ENCODE measurements at regions of chr1 and their contacts with region 1.

Region 1: GRCh38 chr1:3910857-3911845 is 11.1 kb upstream of the C1orf174 start:
- DNase-seq: peak; percentile 92
- H3K4me3 ChIP-seq: peak overlapping the region; percentile 83
- H3K27ac ChIP-seq: peak overlapping the region; percentile 100
- H3K4me1 ChIP-seq: peaks cover 62% of the 10 kb centered on the region
- CTCF ChIP-seq: peak; percentile 90

Region 2: DNA sequence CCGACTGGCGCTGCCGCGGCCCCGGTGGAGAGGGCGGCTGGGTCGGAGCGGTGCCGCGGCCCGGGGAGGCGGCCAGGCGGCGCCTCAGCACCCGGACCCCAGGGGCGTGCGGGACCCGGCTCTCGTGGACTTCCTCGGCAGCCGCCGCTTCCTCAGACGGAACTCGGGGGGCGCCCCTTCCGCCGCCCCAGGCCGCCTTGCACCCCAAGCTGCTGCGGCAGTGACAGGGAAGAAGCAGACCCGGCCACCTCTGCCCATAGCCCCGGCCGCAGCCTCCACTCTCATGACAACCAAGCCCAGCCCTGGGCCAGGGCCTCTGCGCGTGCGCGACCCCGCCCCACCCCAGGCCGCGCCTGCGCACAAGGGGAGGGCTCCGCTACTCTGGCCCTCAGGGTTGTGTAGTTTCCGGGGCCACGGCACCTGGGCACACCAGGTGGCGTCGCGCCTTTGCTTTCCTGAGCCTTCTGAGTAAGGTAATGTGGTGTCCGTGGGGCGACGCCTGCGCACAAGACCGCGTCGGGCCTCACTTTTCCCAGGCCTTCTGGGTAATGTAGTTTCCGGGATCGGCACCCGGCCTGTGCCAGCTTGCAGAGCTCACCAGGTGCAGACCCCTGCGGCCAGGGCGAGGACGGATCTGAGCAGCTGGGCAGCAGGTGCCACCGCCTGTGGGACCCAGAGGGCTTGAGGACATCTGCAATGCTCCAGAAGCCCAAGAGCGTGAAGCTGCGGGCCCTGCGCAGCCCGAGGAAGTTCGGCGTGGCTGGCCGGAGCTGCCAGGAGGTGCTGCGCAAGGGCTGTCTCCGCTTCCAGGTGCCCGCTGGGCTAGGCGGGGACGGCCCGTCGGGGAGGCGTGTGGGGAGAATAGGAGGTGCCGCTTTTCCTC is 54.0 kb before region 1 on chr1 and contains the starts of genes CEP104 and DFFB:
- CTCF ChIA-PET with region 1: interaction called, 7 read pairs
- POLR2A ChIA-PET with region 1: no interaction called
- intact Hi-C with region 1: loop called (anchors 1 kb)
- DNase-seq: peak; percentile 99
- H3K4me3 ChIP-seq: peak within 1 kb of the TSS; percentile 87
- H3K27ac ChIP-seq: peak within 1 kb of the TSS; percentile 36
- H3K4me1 ChIP-seq: peaks cover 26% of the 10 kb centered on the region
- CTCF ChIP-seq: peak; percentile 69
- total RNA-seq, gene CEP104: 26.8 and 36.5 TPM in 2 replicates
- total RNA-seq, gene DFFB: 15.2 and 21.6 TPM in 2 replicates

Region 3: DNA sequence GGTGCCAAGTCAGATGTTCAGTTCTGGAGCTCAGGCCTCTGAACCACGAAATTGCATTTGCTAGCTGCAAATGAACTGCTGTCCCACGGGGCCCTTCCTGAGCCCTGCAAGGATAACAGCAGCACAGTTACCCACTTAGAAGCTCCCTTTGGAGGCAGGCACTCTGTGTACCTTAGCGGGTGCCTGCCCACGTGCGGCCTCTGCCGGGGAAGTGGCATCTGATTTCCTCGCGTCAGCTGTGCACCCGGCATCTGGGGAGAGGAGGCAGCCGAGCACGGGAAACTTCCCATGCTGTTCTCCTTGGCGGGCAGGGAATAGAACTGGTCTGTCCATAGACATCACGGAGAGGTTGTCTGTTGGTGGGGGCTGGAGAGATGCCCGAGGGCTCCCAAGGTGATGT is 136.9 kb after region 1 on chr1:
- CTCF ChIA-PET with region 1: interaction called, 5 read pairs
- POLR2A ChIA-PET with region 1: interaction called, 31 read pairs
- intact Hi-C with region 1: loop called (anchors 1 kb)
- DNase-seq: peak; percentile 78
- H3K4me3 ChIP-seq: peak overlapping the region; percentile 68
- H3K27ac ChIP-seq: peak overlapping the region; percentile 98
- H3K4me1 ChIP-seq: peaks cover 68% of the 10 kb centered on the region
- CTCF ChIP-seq: peak; percentile 69

Region 4: GRCh38 chr1:4172644-4173599 is 261.8 kb after region 1 on chr1:
- CTCF ChIA-PET with region 1: no interaction called
- POLR2A ChIA-PET with region 1: no interaction called
- intact Hi-C with region 1: loop called (anchors 1 kb)
- DNase-seq: peak; percentile 84
- H3K4me3 ChIP-seq: no peak overlapping the region
- H3K27ac ChIP-seq: no peak overlapping the region
- H3K4me1 ChIP-seq: peaks cover 23% of the 10 kb centered on the region
- CTCF ChIP-seq: peak; percentile 80

Region 5: DNA sequence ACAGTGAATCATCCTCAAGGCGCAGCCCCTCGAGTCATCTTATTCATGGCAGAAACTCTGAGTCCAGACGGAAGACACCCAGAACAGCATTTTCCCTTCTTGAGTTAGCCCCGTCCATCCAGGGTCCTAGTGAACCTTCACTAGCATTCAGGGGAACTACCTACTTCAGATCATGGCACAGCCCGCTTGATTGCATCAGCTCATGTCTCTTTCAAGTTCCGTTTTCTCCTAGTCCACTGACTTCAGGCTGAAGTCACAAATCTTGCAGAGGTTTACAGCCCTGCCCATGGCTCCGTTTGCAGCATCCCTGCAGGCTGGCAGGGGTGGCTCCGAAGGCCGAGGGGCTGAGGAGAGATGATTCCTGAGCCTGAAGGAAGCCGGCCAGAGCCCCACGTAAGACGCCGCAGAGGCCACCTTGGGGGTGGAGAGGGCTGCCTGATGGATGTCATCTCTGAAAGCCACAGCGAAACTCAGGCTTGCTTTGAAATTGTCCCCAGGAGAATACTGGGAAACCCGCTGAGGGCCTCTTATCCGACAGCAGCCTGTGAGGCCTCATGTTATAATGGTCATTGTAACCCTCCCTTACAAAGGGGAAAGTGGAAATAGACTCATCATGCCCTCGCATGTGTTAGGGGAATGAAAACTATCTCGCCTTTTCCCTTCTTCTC is 433.0 kb after region 1 on chr1:
- CTCF ChIA-PET with region 1: no interaction called
- POLR2A ChIA-PET with region 1: no interaction called
- intact Hi-C with region 1: loop called (anchors 2 kb)
- DNase-seq: peak; percentile 85
- H3K4me3 ChIP-seq: peak overlapping the region; percentile 32
- H3K27ac ChIP-seq: peak overlapping the region; percentile 53
- H3K4me1 ChIP-seq: peaks cover 15% of the 10 kb centered on the region
- CTCF ChIP-seq: no peak

Region 6: DNA sequence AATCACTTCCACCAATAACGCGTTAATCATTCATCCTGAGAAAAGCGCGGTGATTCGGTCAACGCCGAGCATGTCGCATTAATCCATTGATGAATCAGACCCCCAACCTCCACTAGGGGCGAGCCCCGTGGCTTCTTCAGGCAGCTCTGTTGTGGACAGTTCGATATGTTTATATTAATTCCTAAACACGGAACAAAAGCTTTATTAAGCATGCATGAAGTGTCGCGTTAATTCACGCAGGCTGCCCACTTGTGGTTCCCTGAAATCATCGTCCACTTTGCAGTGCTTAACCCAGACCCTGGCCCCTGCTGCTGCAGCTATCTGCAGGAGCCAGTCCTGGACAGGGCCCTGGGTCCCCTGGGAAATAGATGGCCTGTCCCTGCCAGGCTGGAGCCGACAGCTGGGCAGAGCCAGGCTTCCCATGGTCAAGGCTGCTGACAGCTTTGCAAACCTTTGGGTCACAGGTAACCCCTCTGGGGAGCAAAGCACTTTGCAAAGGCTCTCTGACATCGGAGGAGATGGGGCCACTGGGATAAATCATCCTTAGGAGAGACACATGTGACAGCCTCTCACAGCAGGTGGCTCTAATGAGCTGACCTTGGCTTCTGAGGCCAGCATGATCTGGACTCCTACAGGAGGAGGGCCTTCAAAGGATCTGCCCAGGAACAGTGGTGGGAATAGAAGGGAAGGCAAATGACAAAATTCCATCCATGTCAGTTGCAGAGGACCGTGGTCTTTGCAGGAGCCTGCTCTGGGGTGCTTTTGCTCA is 606.2 kb after region 1 on chr1:
- CTCF ChIA-PET with region 1: no interaction called
- POLR2A ChIA-PET with region 1: no interaction called
- intact Hi-C with region 1: no loop called
- DNase-seq: no peak
- H3K4me3 ChIP-seq: no peak overlapping the region
- H3K27ac ChIP-seq: no peak overlapping the region
- H3K4me1 ChIP-seq: no peaks in the 10 kb centered on the region
- CTCF ChIP-seq: no peak

Region 7: DNA sequence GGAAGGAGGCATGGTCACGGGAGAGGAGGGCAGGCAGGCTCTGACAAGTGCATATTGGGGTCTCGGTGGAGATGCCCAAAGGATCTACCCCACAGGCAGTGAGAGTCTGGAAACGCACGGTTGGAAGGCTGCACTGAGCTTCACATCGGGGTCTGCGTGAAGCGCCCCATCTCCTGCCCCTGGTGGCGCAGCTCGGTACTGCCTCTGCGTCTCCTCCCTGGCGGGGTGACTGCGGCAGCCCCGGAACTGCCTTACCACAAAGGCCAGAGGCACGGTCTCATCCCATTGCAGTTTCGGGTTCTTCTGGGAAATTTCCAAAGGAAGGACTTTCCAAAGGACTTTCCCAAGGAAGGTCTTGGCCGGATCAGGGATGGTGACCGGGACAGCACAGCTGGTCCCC is 674.1 kb after region 1 on chr1:
- CTCF ChIA-PET with region 1: no interaction called
- POLR2A ChIA-PET with region 1: no interaction called
- intact Hi-C with region 1: loop called (anchors 10 kb)
- DNase-seq: peak; percentile 50
- H3K4me3 ChIP-seq: no peak overlapping the region
- H3K27ac ChIP-seq: no peak overlapping the region
- H3K4me1 ChIP-seq: peaks cover 10% of the 10 kb centered on the region
- CTCF ChIP-seq: peak; percentile 78

Region 8: GRCh38 chr1:4825800-4826450 is 914.8 kb after region 1 on chr1:
- CTCF ChIA-PET with region 1: no interaction called
- POLR2A ChIA-PET with region 1: no interaction called
- intact Hi-C with region 1: loop called (anchors 2 kb)
- DNase-seq: peak; percentile 72
- H3K4me3 ChIP-seq: no peak overlapping the region
- H3K27ac ChIP-seq: no peak overlapping the region
- H3K4me1 ChIP-seq: peaks cover 14% of the 10 kb centered on the region
- CTCF ChIP-seq: peak; percentile 89

Measured in OCI-LY7 (cell line).